Activated CD8-positive, alpha-beta T cell treated with anti-CD3 and anti-CD28 coated beads, Interleukin-2, amount 10 ng/mL, durations not matched to agents 7 days and 5 days (primary cell): ENCODE measurements at regions of chr2 and their contacts with region 1.

Region 1: GRCh38 chr2:134282629-134283400 is 28.9 kb downstream of the MGAT5 start:
- DNase-seq: peak; percentile 73
- ATAC-seq: peak; percentile 89
- H3K4me3 Mint-ChIP-seq: peak overlapping the region; percentile 62
- H3K27ac Mint-ChIP-seq: peak overlapping the region; percentile 88
- H3K4me1 Mint-ChIP-seq: peaks cover 44% of the 10 kb centered on the region
- H3K27me3 Mint-ChIP-seq: no peaks in the 10 kb centered on the region

Region 2: DNA sequence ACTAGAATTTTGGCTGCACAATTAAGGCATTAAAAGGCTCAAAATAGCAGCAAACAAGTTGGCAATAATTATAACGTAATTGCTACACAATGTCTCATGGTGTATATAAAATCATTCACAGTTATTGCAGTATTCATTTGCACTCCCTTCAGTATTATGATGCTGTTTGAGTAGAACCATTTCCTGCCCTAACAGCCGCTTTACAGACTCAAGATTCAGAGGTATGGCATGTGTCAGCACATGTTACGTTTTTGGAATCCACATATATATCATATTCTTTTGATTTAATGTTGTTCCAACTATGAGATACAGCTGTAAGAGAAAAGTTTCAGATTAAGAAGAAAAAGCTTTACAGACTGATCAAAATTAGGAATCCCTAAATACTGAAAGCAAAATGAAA is 658.3 kb before region 1 on chr2:
- CTCF ChIA-PET with region 1: no interaction called
- POLR2A ChIA-PET with region 1: no interaction called
- DNase-seq: no peak
- ATAC-seq: no peak
- H3K4me3 Mint-ChIP-seq: no peak overlapping the region
- H3K27ac Mint-ChIP-seq: no peak overlapping the region
- H3K4me1 Mint-ChIP-seq: no peaks in the 10 kb centered on the region
- H3K27me3 Mint-ChIP-seq: no peaks in the 10 kb centered on the region

Region 3: DNA sequence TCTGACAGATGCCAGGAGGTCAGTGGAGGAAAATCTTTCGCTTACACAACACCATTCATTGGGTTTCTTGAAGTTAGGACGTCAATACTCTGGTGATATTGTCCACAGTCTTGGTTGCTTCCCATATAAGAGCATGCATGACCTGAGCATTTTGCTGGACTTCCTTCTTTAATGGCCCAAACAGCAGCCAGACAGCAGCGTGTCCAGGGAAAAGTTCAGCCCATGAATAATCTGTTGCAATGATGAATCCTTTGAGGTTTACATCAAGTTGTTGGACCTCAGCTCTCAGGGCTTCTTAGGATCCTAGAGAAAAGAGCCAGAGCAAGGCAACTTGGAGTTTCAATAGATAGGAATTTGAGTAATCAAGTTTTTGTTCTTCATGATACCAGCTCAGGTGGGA is 184.5 kb before region 1 on chr2:
- CTCF ChIA-PET with region 1: no interaction called
- POLR2A ChIA-PET with region 1: no interaction called
- DNase-seq: no peak
- ATAC-seq: no peak
- H3K4me3 Mint-ChIP-seq: no peak overlapping the region
- H3K27ac Mint-ChIP-seq: no peak overlapping the region
- H3K4me1 Mint-ChIP-seq: no peaks in the 10 kb centered on the region
- H3K27me3 Mint-ChIP-seq: peaks cover 14% of the 10 kb centered on the region

Region 4: GRCh38 chr2:134261398-134262131 is 21.2 kb before region 1 on chr2:
- CTCF ChIA-PET with region 1: interaction called, 11 read pairs
- POLR2A ChIA-PET with region 1: no interaction called
- DNase-seq: no peak
- ATAC-seq: no peak
- H3K4me3 Mint-ChIP-seq: no peak overlapping the region
- H3K27ac Mint-ChIP-seq: peak overlapping the region; percentile 63
- H3K4me1 Mint-ChIP-seq: peaks cover 78% of the 10 kb centered on the region
- H3K27me3 Mint-ChIP-seq: no peaks in the 10 kb centered on the region